Right ventricle myocardium inferior (tissue), 1 donor: ENCODE measurements at regions of chr14 and their contacts with region 1.

Region 1: GRCh38 chr14:33932576-33933345 is 18.1 kb downstream of the EGLN3 start:
- DNase-seq: no peak
- ATAC-seq: peak; percentile 40

Region 2: DNA sequence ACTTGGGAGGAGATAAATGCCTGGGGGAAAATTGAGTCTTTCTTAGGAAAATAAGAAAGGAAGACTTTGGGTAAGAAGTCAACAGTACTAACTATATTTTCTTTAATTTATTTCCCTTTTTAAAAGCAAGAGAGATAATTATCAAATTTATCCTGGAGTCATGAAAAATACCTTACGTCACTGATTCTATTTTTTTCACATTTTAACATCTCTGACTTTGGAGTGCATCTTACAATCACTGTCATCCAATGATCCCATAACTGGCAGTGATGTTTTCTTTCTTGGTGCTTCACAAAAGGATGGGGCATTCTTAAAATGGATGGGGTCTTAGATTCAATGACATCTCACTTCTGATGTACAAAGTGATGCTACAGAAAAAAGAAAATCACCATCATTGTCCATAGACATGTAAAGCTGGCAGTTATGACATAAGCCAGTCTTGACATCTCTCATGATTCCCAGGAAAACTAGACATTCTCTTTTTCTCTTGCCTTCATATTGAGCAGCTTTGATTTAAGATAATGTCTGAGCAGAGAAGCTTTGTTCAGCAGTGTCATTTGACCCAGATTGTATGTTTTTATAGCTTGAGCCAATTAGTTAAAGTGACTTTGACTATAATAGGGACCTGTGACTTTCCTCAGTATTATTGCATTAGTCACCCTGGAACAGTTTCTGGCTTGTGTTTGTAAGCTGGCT is 218.1 kb before region 1 on chr14:
- intact Hi-C with region 1: no loop called
- DNase-seq: no peak
- ATAC-seq: no peak

Region 3: GRCh38 chr14:33848706-33849454 is 83.9 kb before region 1 on chr14:
- intact Hi-C with region 1: loop called (anchors 5 kb)
- DNase-seq: no peak
- ATAC-seq: peak; percentile 91